Left ventricle myocardium superior (tissue), 1 donor: ENCODE measurements at regions of chr2 and their contacts with region 1.

Region 1: DNA sequence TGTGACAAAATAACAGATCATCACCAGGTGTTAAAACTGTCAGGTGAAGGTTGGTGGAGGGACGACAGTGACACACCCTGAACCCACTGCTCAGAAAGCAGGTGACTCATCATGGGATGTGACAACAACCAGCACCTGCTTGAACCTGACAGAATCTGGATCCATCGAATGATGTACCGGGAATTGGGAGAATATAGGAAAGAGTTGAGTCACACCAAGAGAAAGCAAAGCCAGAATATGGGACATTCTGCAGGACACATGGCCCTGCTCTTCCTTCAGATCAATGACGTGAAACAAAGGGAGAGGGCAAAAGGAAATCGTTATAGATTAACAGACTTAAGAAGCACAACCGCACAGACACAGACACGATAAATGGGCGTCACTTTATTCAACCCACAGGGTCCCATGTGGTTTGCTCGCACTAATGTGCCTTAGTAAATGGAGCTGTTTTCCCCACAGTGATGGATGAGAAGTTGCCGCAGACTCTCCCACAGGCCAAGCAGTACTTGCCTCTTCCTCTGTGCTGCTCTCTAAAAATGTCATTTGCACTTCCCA is 100.1 kb downstream of the CRACDL start:
- DNase-seq: no peak
- ATAC-seq: no peak

Region 2: DNA sequence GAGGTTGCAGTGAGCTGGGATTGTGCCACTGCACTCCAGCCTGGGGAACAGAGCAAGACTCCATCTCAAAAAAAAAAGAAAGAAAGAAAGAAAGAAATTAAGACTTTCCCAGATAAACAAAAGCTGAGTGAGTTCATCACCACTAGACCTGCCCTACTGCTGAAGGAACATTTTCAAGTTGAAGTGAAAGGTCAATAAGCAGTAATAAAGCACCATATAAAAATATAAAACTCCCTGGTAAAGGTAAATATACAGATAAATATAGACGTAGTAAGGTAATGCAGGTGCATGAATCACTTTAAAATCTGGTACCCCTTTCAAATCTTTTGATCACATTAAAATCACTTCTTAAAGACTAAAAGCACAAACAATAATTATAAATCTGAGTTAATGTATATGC is 184.9 kb before region 1 on chr2:
- intact Hi-C with region 1: loop called (anchors 2 kb)
- DNase-seq: no peak
- ATAC-seq: no peak

Region 3: DNA sequence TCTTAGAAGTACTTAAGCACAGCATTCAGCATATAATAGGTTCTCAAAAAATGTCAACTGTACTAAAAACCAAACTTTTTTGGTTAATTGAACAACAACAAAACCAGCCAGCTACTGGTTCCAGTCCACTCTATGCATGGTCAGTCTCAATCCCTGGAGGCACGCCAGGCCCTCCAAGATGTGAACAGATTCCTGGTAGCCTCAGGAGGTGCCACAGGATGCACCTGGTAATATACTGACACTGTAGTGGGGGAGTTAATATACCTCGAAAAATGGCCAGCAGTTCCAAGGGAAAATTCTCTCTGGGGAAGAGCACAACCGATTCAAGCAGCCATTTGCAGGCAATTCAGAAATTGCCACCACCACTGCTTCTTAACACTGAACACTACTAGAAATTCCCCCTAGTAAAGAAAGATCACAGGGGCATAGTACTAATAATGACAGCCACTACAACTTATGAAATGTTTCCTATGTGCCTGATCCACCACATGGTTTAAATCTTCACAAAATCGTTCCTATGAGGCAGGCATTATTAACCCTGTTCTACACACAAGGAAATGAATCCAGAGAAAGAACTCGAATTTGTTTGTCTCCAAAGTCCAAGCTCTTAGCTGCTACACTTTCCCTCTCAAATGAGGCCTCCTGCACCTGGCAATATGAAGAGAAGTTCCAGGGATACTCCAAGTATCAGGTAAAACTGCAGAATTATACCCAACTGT is 108.4 kb before region 1 on chr2:
- intact Hi-C with region 1: loop called (anchors 10 kb)
- DNase-seq: peak; percentile 56
- ATAC-seq: no peak

Region 4: GRCh38 chr2:98975611-98976010 is 139.7 kb after region 1 on chr2:
- intact Hi-C with region 1: no loop called
- DNase-seq: no peak
- ATAC-seq: no peak

Region 5: GRCh38 chr2:99139003-99139402 is 303.1 kb after region 1 on chr2:
- intact Hi-C with region 1: no loop called
- DNase-seq: no peak
- ATAC-seq: no peak